ENCODE measurements at regions of chr4 and their contacts with region 1.

Region 1: GRCh38 chr4:145557720-145558119 is 61.5 kb upstream of the MMAA start:
- DNase-seq: peak; percentile 20
- ATAC-seq: peak; percentile 98
- H3K4me3 ChIP-seq: no peak overlapping the region
- H3K27ac ChIP-seq: no peak overlapping the region
- H3K4me1 ChIP-seq: peaks cover 2% of the 10 kb centered on the region; the same call in 1 of the 2 replicates
- H3K27me3 ChIP-seq: no peaks in the 10 kb centered on the region
- CTCF ChIP-seq: peak; percentile 92 to 96 (median 96)
- EP300 ChIP-seq: no peak
- POLR2A ChIP-seq: no peak
- RAD21 ChIP-seq: peak; percentile 95

Region 2: DNA sequence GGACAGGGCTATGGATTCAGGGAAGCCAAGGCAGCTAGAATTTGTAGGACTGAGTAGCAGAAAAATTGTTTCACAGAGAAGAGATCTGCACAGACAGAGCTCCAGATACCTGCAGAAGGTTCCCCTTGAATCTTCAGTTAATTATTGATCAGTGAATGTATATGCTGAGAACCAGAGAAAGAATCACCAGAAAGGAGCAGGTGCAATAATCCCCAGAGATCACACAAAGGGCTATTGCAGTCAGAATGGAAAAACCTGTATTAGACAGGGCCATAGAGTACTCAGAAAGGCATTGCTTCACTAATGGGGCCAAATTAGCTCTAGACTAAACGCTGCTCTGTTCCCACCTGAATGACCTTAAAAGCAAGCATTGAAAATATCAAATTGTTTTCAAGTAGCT is 111.5 kb before region 1 on chr4:
- CTCF ChIA-PET with region 1: no interaction called
- POLR2A ChIA-PET with region 1: no interaction called
- RAD21 ChIA-PET with region 1: no interaction called
- SMC1A ChIA-PET with region 1: no interaction called
- in situ Hi-C with region 1: no loop called
- intact Hi-C with region 1: no loop called
- DNase-seq: peak; percentile 5
- ATAC-seq: no peak
- H3K4me3 ChIP-seq: no peak overlapping the region
- H3K27ac ChIP-seq: no peak overlapping the region
- H3K4me1 ChIP-seq: no peaks in the 10 kb centered on the region
- H3K27me3 ChIP-seq: no peaks in the 10 kb centered on the region
- CTCF ChIP-seq: no peak
- EP300 ChIP-seq: no peak
- POLR2A ChIP-seq: no peak
- RAD21 ChIP-seq: no peak

Region 3: DNA sequence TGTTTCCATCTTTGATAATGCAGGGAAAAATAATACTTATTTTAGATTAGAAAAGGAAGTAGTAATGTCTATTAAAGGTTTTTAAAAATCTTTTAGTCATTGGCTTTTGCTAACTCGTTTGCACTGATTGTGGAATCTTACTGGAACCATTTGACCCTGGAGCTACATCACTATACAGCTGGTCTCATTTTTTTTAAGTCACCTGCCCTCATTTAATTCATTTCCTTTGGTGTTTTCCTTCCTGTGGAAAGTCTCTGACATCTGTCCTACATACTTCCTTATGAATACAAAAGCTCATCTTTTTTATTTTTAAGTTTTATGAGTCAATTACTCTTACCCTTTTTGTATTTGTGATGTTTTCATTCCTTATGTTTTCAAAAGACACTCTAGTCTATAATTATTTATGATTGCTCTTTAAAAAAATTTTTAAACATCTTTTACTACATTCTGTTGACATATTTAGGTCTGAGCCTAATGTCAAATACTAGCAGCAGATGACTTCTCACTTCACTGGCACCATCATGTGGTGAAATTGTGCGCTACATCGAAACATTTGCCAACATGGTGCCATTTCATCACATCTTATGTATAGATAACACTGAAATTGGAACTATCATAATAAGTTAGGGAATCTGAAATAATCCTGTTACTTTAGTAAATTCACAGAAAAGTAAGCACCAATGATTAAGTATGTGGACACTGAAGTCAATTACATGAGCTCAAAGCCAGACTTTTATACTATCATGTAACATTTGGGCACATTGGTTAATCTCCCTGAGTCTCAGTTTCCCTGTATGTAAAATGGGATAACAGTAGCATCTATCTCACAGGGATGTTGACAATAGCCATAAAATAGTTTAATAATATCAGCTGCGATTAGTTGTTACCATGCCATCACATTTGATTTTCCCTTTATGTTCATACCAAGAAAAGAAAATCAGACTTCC is 52.0 kb after region 1 on chr4:
- CTCF ChIA-PET with region 1: interaction called, 10 read pairs
- POLR2A ChIA-PET with region 1: no interaction called
- RAD21 ChIA-PET with region 1: interaction called, 8 read pairs
- SMC1A ChIA-PET with region 1: interaction called, 4 read pairs
- in situ Hi-C with region 1: no loop called
- intact Hi-C with region 1: loop called (anchors 5 kb)
- DNase-seq: peak; percentile 58
- ATAC-seq: peak; percentile 90
- H3K4me3 ChIP-seq: no peak overlapping the region
- H3K27ac ChIP-seq: no peak overlapping the region
- H3K4me1 ChIP-seq: no peaks in the 10 kb centered on the region
- H3K27me3 ChIP-seq: no peaks in the 10 kb centered on the region
- CTCF ChIP-seq: peak; percentile 72 to 83 (median 82)
- EP300 ChIP-seq: no peak
- POLR2A ChIP-seq: no peak
- RAD21 ChIP-seq: peak; percentile 97

Region 4: GRCh38 chr4:145920205-145920604 is 362.5 kb after region 1 on chr4:
- CTCF ChIA-PET with region 1: no interaction called
- POLR2A ChIA-PET with region 1: no interaction called
- RAD21 ChIA-PET with region 1: no interaction called
- SMC1A ChIA-PET with region 1: no interaction called
- in situ Hi-C with region 1: no loop called
- intact Hi-C with region 1: no loop called
- DNase-seq: no peak
- ATAC-seq: no peak
- H3K4me3 ChIP-seq: no peak overlapping the region
- H3K27ac ChIP-seq: no peak overlapping the region
- H3K4me1 ChIP-seq: no peaks in the 10 kb centered on the region
- H3K27me3 ChIP-seq: no peaks in the 10 kb centered on the region
- CTCF ChIP-seq: no peak
- EP300 ChIP-seq: no peak
- POLR2A ChIP-seq: no peak
- RAD21 ChIP-seq: no peak